ENCODE measurements at regions of chr16 and their contacts with region 1.

Region 1: DNA sequence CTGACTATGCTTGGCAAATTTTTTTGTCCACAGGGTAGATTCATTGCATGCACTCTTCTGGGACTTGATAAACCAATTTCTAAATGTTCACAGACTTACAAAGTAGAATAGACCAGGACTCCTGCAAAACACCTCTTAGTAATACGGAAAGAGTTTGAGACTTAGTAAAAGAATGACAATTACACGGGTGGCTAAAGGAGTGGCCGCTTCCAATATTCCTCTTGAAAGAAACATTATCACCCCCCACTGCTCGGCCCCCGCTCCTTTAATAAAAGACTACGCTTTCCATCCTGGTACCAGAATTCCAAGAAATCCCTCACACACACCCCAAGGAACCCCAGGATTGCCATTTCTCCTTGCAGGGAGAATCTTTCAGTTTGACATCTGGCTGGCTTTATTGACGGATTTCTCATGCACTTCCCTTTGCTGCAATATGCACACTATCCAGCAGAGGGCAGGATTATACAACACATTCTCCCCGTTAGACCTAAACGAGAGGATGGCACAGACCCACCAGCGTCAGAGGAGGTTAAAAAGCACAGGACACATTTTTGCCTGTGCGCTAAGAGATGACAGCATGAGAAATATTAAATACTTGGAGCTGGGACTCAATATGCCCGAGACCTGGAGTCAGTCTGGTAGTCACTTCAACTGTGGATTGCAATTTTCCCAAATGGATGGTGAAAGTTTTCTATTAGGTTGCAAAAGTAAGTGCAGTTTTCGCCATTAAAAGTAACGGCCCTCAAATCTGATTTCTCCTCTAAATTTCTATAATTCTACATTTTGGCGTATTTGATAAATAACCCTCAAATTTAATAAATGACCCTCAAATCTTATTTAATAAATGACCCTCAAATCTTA is 46.6 kb upstream of the NUDT7 start:
- DNase-seq: peak; percentile 67 to 92 (median 75)
- H3K4me3 ChIP-seq: no peak overlapping the region
- H3K27ac ChIP-seq: no peak overlapping the region
- H3K4me1 ChIP-seq: no peaks in the 10 kb centered on the region
- H3K27me3 ChIP-seq: no peaks in the 10 kb centered on the region
- CTCF ChIP-seq: peak; percentile 87 to 99 (median 96)
- POLR2A ChIP-seq: no peak

Region 2: GRCh38 chr16:77359065-77359502 is 316.6 kb before region 1 on chr16:
- intact Hi-C with region 1: no loop called
- DNase-seq: no peak
- H3K4me3 ChIP-seq: no peak overlapping the region
- H3K27ac ChIP-seq: no peak overlapping the region
- H3K4me1 ChIP-seq: no peaks in the 10 kb centered on the region
- H3K27me3 ChIP-seq: peaks cover 3% of the 10 kb centered on the region
- CTCF ChIP-seq: no peak
- POLR2A ChIP-seq: no peak

Region 3: DNA sequence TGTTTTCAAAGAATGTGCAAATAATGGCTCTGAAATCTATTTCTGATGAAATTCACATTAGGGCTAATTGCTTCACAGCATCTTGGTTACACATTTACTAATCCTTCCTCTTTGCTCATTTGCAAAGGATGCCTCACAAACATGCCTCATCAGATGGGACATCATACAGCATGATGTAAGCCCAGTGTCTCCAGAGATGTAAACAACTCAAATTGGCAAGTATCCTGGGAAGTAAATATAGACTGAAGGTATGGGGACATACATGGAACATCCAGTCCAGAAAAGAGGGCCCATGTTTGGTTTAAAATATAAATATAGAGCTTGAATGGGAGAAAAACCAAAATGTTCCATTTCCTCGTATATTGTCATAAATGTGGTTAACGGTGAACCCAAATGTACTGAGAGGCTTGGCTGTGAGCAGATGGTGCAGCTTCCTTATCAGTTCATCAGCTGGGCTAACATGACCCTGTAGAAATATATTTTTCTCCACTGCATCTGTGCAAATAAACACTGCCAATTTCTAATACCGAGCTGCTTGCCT is 96.3 kb before region 1 on chr16:
- intact Hi-C with region 1: no loop called
- DNase-seq: no peak
- H3K4me3 ChIP-seq: no peak overlapping the region
- H3K27ac ChIP-seq: no peak overlapping the region
- H3K4me1 ChIP-seq: no peaks in the 10 kb centered on the region
- H3K27me3 ChIP-seq: no peaks in the 10 kb centered on the region
- CTCF ChIP-seq: no peak
- POLR2A ChIP-seq: no peak

Region 4: DNA sequence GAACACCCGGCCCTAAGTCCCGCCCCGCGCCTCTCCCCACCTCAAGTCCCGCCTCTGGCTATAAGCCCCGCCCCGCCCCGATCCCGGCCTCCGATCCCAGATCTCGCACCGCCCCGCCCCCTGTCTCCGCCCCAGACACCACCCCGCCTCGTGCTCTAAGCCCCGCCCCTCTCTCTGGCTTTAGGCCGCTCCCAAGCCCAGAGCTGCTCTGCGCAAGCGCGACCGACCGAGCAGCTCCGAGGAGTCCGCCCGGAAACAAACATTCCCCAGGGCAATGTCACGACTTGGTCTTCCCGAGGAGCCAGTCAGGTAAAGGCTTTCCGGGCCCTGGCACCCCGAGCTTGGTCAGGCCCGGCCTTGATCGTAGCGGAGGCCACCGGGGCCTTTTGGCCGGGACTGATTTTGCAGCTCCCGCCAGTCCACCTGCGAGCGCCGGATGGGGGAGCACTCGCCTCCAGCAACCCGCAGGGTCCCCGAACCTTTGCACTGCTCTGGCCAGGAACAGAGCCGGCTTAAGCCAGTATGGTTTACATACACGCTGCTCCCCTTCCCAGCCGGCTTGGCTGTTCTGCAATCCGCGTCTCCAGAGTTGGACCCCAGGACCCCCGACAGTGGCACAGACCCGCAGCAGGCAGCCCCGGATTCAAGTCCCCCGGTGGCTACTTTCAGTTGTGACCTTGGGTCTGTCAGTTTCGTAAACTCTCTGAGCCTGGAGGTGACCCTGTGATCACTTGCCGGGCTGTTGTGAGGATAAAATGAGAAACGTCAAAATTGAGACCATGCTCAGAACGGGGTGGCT is 46.8 kb after region 1 on chr16 and contains the start of gene NUDT7:
- intact Hi-C with region 1: no loop called
- DNase-seq: peak; percentile 99 to 100 (median 99)
- H3K4me3 ChIP-seq: peak within 1 kb of the TSS; percentile 36 to 83 (median 57)
- H3K27ac ChIP-seq: peak within 1 kb of the TSS; percentile 77 to 95 (median 84)
- H3K4me1 ChIP-seq: peaks cover 7 to 15% of the 10 kb centered on the region in 2 donors
- H3K27me3 ChIP-seq: no peaks in the 10 kb centered on the region
- CTCF ChIP-seq: peak in 3 of 6 experiments; percentile 7 to 11 (median 9)
- POLR2A ChIP-seq: peak; percentile 62 to 89
- total RNA-seq, gene NUDT7: 15.3 to 62.6 (median 32.9) TPM

Region 5: GRCh38 chr16:77775911-77776909 is 100.5 kb after region 1 on chr16:
- intact Hi-C with region 1: loop called (anchors 5 kb)
- DNase-seq: peak in 4 of 7 donors; percentile 21 to 53 (median 37)
- H3K4me3 ChIP-seq: no peak overlapping the region
- H3K27ac ChIP-seq: no peak overlapping the region
- H3K4me1 ChIP-seq: no peaks in the 10 kb centered on the region
- H3K27me3 ChIP-seq: no peaks in the 10 kb centered on the region
- CTCF ChIP-seq: no peak
- POLR2A ChIP-seq: no peak

Region 6: GRCh38 chr16:77782694-77783093 is 107.0 kb after region 1 on chr16:
- intact Hi-C with region 1: loop called (anchors 5 kb)
- DNase-seq: peak in 4 of 7 donors; percentile 21 to 50 (median 28)
- H3K4me3 ChIP-seq: no peak overlapping the region
- H3K27ac ChIP-seq: no peak overlapping the region
- H3K4me1 ChIP-seq: no peaks in the 10 kb centered on the region
- H3K27me3 ChIP-seq: no peaks in the 10 kb centered on the region
- CTCF ChIP-seq: peak; percentile 23 to 63 (median 56)
- POLR2A ChIP-seq: no peak

Region 7: DNA sequence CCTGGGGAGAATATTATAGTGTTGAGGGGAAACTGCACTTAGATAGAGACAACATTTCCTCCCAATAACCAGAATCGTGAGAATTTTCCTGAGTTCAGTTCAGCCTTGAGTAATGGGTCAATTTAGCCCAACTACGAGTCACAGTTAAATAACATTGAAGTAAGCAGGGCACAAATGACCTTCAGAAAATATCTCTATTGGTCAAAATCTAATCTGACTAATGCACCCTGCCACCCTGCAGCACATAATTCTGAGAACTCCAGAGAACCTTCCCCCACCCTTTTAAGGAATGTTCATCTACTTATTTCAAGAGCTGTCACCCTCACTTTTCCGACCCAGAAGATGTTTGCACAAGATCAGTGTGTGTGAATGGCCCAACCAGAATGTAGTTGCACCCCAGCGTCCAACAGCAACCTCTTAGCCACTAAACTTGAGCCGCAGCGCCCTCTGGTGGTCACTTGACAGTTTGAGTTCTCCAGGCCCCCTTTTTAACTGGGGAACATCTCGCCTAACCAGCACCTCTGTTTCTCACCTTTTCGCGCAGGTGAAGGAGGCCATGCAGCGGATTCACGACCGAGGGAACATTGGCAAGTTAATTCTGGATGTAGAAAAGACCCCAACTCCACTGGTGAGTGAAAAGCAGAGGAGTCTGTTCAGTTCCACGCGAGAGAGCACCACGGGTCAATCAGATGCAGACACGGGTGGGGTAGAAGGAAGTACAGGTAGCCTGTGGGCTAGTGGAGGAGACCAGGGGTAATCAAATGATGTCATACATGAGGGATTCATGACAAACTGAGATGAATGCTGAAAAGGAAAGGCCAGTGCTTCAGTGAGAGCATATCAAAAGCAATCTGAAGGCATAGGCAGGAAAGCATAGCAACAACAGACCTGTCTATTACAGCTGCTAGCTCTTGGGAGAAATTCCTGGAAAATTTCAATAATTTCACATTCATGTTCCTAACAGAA is 295.9 kb after region 1 on chr16:
- intact Hi-C with region 1: loop called (anchors 2 to 10 kb)
- DNase-seq: peak; percentile 78 to 94 (median 86)
- H3K4me3 ChIP-seq: no peak overlapping the region
- H3K27ac ChIP-seq: peak overlapping the region in 2 of 5 donors; percentile 27 to 51
- H3K4me1 ChIP-seq: peaks cover 0 to 8% of the 10 kb centered on the region in 2 donors
- H3K27me3 ChIP-seq: no peaks in the 10 kb centered on the region
- CTCF ChIP-seq: peak; percentile 82 to 92 (median 86)
- POLR2A ChIP-seq: no peak

Measured in adrenal gland (tissue), 19 donors.